Dorsolateral prefrontal cortex (tissue), 120 donors: ENCODE measurements at regions of chr14 and their contacts with region 1.

Region 1: DNA sequence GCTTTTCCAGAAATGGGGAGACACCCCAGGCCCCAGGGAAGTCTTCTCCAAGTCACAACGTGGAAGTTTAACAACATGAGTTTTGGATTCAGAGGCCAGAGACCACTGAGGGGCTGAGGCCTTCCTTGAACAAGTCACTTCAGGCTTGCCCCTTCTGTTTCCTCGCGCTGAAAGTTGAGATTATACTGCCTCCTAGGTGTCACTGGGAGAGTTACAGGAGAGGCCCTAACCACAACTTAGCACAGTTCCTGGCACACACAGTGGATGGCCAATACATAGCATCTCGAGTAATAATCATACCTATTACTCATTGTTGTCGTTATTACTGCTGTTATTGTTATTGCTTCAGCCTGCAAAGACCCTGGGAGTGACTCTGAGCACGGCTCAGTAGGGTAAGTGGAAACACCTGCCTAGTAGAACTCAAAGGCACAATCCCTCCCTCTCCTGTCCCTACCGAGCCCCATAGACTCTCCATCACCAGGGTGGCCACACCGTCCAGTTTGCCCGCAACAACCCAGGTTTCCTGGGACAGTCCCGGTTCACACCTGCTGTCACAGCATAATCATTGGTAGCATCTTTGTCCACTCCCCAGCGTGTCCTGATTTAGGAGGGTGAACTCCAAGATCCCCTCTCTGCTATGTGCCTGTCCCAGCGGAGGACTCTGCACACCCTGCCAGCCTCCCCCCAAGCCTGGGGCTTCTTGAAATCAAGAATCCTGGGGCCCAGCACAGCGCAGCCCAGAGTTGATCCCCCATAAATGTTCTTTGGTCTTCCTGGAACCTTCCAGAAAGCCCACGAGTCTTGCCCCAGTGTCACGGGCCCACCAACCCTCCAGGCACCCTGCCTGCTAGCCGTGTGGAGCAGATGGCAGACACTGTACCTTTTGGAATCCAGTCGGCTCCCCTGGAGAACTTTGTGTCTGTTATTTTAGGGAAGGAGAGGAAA is 85.0 kb downstream of the SYNE3 start:
- DNase-seq: peak in 1 of 10 donors; percentile 20
- H3K4me3 ChIP-seq: no peak overlapping the region
- H3K27ac ChIP-seq: peak overlapping the region in 39 of 59 donors; percentile 4 to 74 (median 54)
- H3K27me3 ChIP-seq: no peaks in the 10 kb centered on the region
- CTCF ChIP-seq: peak; percentile 30 to 74 (median 59)

Region 2: GRCh38 chr14:94689218-94689984 is 742.1 kb before region 1 on chr14:
- intact Hi-C with region 1: loop called (anchors 5 kb)
- DNase-seq: peak in 9 of 10 donors; percentile 40 to 81 (median 60)
- H3K4me3 ChIP-seq: peak overlapping the region in 28 of 59 donors; percentile 1 to 39 (median 22)
- H3K27ac ChIP-seq: no peak overlapping the region
- H3K27me3 ChIP-seq: peaks cover 0 to 7% (median 0%) of the 10 kb centered on the region in 45 donors
- CTCF ChIP-seq: peak; percentile 77 to 98 (median 95)

Region 3: DNA sequence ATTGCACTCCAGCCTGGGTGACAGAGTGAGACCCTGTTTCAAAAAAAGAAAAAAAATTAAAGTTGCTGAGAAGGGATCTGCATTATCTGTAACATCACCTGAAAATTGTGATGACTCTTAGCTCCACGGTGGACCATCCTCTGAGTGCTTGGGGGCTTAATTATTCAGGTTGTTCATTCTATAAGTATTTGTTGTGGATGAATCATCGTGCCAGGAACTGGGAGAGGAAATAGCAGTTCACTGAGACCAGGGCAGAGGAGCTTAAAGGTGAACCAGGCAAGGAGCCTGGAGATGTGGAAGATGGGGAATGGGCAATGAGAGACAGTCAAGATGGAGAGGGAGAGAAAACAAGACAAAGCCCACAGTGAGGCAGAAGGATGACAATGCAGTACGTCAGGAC is 636.1 kb before region 1 on chr14:
- intact Hi-C with region 1: loop called in 1 of 2 experiments (anchors 5 kb)
- DNase-seq: no peak
- H3K4me3 ChIP-seq: no peak overlapping the region
- H3K27ac ChIP-seq: no peak overlapping the region
- H3K27me3 ChIP-seq: peaks cover 0 to 22% (median 0%) of the 10 kb centered on the region in 45 donors
- CTCF ChIP-seq: no peak

Region 4: DNA sequence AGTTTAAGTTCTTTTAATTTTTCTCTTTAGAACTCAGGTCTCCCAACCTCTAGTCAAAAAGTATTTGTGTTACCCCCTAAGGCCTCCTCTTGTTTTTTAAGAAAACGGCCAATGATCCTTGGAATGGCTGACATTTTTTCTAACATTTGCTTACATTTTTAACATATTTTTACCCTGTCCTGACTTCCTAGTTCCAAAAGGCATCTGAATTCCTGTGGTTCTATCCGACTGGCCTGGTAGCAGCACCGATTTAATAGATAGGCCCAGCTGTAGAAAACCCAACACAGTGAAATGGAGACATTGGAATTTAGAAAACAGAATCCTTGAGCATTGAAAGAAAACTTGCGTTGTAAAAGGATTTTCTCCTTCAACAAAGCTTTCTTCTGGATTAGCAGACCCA is 526.8 kb before region 1 on chr14:
- intact Hi-C with region 1: loop called in 1 of 2 experiments (anchors 5 kb)
- DNase-seq: no peak
- H3K4me3 ChIP-seq: no peak overlapping the region
- H3K27ac ChIP-seq: no peak overlapping the region
- H3K27me3 ChIP-seq: peaks cover 0 to 12% (median 0%) of the 10 kb centered on the region in 45 donors
- CTCF ChIP-seq: no peak

Region 5: DNA sequence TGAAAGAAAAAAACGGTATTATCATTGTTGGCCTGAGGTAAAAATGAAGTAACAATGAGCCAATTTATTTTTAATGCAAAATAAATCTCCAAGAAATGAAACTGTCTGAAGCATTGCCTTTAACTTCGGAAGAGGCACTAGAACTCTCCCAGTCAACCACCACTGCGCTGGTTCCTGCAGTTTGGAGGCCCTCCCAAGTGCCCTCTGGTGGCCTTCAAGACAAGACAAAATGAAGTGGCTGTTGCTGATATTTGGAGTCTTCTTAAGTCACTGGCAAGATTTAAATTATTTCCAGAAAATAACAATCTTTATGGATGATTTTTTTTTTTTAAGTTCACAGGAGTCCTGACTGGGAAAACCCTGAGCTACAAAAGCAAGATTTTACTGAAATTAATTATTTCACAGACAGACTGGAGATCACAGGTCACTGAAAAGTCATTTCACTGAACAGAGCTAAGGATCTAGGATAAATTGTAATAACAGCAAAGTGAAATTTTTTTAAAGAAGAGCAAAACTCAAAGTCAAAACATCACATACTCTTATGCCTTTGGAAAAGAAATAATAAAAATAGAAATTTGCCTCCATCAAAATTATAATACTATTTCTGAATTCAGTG is 332.4 kb before region 1 on chr14:
- intact Hi-C with region 1: loop called in 1 of 2 experiments (anchors 5 kb)
- DNase-seq: peak; percentile 27 to 67 (median 58)
- H3K4me3 ChIP-seq: no peak overlapping the region
- H3K27ac ChIP-seq: peak overlapping the region in 15 of 59 donors; percentile 4 to 80 (median 34)
- H3K27me3 ChIP-seq: no peaks in the 10 kb centered on the region
- CTCF ChIP-seq: peak in 55 of 56 donors; percentile 37 to 86 (median 67)

Region 6: DNA sequence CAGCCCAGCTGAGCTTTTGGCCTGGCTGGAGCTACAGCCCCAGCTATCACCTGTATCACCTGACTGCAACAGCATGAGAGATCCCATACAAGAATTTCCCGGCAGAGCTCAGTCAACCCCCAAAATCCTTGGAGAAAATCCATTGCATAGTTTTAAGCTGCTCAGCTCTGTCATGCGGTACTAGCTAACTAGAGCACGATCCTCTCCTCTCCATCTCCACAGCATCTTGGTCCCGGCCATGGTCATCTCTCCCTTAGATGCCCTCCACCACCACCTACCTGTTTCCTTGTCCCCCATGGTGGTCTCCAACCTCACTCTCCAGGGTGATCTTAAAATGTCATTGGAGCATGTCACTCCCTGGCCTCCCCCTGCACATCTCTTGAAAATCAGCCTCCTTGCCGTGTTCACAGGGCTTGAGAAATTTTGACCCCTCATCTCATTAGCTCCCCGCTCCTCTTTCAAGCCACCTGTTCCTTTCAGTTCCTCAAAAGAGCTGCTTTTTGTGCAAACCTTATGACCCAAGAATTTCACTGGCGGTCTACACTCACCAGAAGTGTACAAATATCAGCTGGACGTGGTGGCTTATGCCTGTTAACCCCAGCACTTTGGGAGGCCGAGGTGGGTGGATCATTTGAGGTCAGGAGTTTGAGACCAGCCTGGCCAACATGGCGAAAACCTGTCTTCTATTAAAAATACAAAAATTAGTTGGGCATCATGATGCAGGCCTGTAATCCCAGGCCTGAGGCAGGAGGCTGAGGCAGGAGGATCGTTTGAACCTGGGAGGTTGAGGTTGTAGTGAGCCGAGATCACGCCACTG is 103.7 kb before region 1 on chr14:
- intact Hi-C with region 1: loop called in 1 of 2 experiments (anchors 5 kb)
- DNase-seq: no peak
- H3K4me3 ChIP-seq: no peak overlapping the region
- H3K27ac ChIP-seq: no peak overlapping the region
- H3K27me3 ChIP-seq: no peaks in the 10 kb centered on the region
- CTCF ChIP-seq: no peak